WTC11 (cell line): ENCODE measurements at regions of chrX and their contacts with region 1.

Region 1: DNA sequence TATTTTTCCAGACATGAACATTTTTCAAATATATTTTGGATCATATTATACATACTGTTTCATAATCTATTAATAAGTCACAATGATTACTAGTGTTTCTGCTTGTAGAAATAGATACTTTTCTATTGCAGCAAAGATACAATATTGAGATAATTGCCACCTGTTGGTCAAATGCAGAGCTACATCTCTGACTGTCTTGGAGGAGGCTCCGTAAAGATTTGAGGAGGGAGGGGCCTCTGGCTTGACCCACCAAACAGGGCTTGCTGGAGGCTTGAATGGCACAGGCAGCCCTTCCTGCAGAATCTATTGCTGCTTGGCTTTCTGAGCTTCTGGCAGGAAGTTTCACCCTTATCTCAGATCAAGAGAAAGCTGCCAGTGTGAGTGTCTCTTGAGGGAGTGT is 99.3 kb upstream of the ARMCX2 start:
- DNase-seq: peak; percentile 56
- ATAC-seq: peak; percentile 100
- H3K4me3 Mint-ChIP-seq: no peak overlapping the region
- H3K27ac Mint-ChIP-seq: peak overlapping the region; percentile 72
- H3K4me1 Mint-ChIP-seq: peaks cover 37% of the 10 kb centered on the region
- H3K27me3 Mint-ChIP-seq: no peaks in the 10 kb centered on the region
- CTCF ChIP-seq: peak; percentile 16; the same call in 1 of the 2 replicates

Region 2: GRCh38 chrX:100812216-100813158 is 946.5 kb before region 1 on chrX:
- CTCF ChIA-PET with region 1: no interaction called
- POLR2A ChIA-PET with region 1: no interaction called
- DNase-seq: peak; percentile 9
- ATAC-seq: peak; percentile 76
- H3K4me3 Mint-ChIP-seq: peak overlapping the region; percentile 49
- H3K27ac Mint-ChIP-seq: 0 out of 2 replicates have a peak overlapping the region, but pooled peaks have one; percentile 57
- H3K4me1 Mint-ChIP-seq: peaks cover 15% of the 10 kb centered on the region
- H3K27me3 Mint-ChIP-seq: peaks cover 28% of the 10 kb centered on the region
- CTCF ChIP-seq: no peak

Region 3: DNA sequence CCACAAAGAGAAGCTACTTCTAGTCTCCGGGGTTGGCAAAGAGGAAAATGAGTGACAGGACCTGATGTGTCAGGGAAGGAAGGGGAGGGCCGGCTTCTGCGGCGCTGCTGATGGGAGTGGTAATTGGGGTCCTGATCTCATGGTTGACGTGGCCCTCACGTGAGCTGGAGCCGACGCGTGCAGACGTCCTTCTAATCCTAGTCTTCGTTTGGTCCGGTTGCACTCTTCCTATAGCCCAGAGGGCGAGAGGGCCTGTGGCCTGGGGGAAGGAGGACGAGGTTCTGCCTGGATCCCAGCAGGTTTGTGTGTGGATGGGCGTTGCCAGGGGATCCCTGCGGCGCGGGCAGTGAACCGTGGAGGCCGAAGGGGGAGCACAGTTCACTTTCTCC is 208.6 kb before region 1 on chrX and contains the start of gene ARMCX1:
- CTCF ChIA-PET with region 1: no interaction called
- POLR2A ChIA-PET with region 1: no interaction called
- DNase-seq: peak; percentile 27
- ATAC-seq: peak; percentile 82
- H3K4me3 Mint-ChIP-seq: peak within 1 kb of the TSS; percentile 87
- H3K27ac Mint-ChIP-seq: peak within 1 kb of the TSS; percentile 89
- H3K4me1 Mint-ChIP-seq: peaks cover 16% of the 10 kb centered on the region
- H3K27me3 Mint-ChIP-seq: no peaks in the 10 kb centered on the region; the same call in 1 of the 2 replicates
- CTCF ChIP-seq: no peak
- total RNA-seq, gene ARMCX1: 23.6 to 27.4 TPM (median 23.7 TPM) in 3 replicates

Region 4: DNA sequence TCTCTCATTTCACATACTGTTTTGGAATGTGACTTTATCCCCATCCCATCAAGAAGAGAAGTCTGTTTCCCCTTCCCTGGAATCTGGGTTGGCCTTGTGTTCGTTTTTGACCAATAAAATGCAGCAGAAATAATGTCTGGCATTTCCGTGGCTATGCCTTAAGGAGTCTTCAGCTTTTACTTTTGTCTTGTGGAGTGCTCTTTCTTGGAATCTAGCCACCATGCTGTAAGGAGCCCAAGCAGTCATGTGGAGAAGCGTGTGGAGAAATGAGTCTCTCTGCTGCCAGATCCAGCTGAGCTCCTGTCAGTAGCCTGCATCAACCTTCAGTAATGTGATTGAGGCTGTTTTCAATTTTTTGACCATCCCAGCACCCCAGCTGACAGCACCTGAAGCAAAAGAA is 14.9 kb before region 1 on chrX:
- CTCF ChIA-PET with region 1: interaction called, 10 read pairs
- POLR2A ChIA-PET with region 1: no interaction called
- DNase-seq: no peak
- ATAC-seq: no peak
- H3K4me3 Mint-ChIP-seq: no peak overlapping the region
- H3K27ac Mint-ChIP-seq: no peak overlapping the region
- H3K4me1 Mint-ChIP-seq: no peaks in the 10 kb centered on the region
- H3K27me3 Mint-ChIP-seq: no peaks in the 10 kb centered on the region
- CTCF ChIP-seq: no peak

Region 5: DNA sequence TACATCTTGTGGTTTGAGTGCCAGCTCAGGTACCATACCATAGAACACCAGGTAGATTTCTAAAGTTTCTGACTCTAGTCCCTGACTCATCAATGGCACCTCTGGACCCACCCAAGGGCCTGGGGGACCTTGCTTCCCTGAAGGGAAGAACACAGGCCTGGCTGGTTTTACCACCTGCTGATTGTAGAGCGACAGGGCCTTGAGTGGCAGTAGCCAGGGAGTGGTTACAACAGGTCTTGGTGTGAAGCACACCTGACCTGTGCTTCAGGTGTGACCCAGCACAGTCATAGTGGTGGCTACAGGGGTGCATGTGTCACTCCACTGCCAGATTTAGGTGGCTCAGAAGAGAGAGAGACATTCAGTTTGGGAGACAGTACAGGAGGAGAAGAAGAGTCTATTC is 104.9 kb after region 1 on chrX:
- CTCF ChIA-PET with region 1: no interaction called
- POLR2A ChIA-PET with region 1: no interaction called
- DNase-seq: no peak
- ATAC-seq: no peak
- H3K4me3 Mint-ChIP-seq: no peak overlapping the region
- H3K27ac Mint-ChIP-seq: no peak overlapping the region
- H3K4me1 Mint-ChIP-seq: no peaks in the 10 kb centered on the region
- H3K27me3 Mint-ChIP-seq: peaks cover 2% of the 10 kb centered on the region; the same call in 1 of the 2 replicates
- CTCF ChIP-seq: no peak